ENCODE measurements at regions of chr14 and their contacts with region 1.

Region 1: GRCh38 chr14:32366256-32366879 is 37.3 kb downstream of the AKAP6 start:
- DNase-seq: no peak
- H3K4me3 ChIP-seq: no peak overlapping the region
- H3K27ac ChIP-seq: no peak overlapping the region
- H3K4me1 ChIP-seq: peaks cover 11% of the 10 kb centered on the region
- H3K27me3 ChIP-seq: no peaks in the 10 kb centered on the region
- CTCF ChIP-seq: no peak

Region 2: GRCh38 chr14:32319362-32320049 is 46.9 kb before region 1 on chr14:
- CTCF ChIA-PET with region 1: no interaction called
- POLR2A ChIA-PET with region 1: interaction called, 36 read pairs
- intact Hi-C with region 1: no loop called
- DNase-seq: peak; percentile 2 to 78
- H3K4me3 ChIP-seq: no peak overlapping the region
- H3K27ac ChIP-seq: peak overlapping the region; percentile 16; the same call in 1 of the 2 replicates
- H3K4me1 ChIP-seq: peaks cover 16% of the 10 kb centered on the region
- H3K27me3 ChIP-seq: no peaks in the 10 kb centered on the region
- CTCF ChIP-seq: no peak

Measured in PC-9 (cell line).